ENCODE measurements at regions of chrX and their contacts with region 1.

Region 1: GRCh38 chrX:54999717-55000598 is at the start of gene APEX2:
- DNase-seq: peak; percentile 74 to 94 (median 86)
- ATAC-seq: peak; percentile 94
- H3K4me3 ChIP-seq: peak within 1 kb of the TSS; percentile 70 to 71
- H3K4me3 Mint-ChIP-seq: peak within 1 kb of the TSS; percentile 92
- H3K27ac ChIP-seq: peak within 1 kb of the TSS; percentile 97 to 98
- H3K27ac Mint-ChIP-seq: peak within 1 kb of the TSS; percentile 96
- H3K4me1 ChIP-seq: peaks cover 12% of the 10 kb centered on the region
- H3K4me1 Mint-ChIP-seq: peaks cover 35% of the 10 kb centered on the region
- H3K27me3 ChIP-seq: no peaks in the 10 kb centered on the region
- H3K27me3 Mint-ChIP-seq: no peaks in the 10 kb centered on the region
- CTCF ChIP-seq: no peak
- total RNA-seq, gene APEX2: 6.6 to 7.5 TPM

Region 2: DNA sequence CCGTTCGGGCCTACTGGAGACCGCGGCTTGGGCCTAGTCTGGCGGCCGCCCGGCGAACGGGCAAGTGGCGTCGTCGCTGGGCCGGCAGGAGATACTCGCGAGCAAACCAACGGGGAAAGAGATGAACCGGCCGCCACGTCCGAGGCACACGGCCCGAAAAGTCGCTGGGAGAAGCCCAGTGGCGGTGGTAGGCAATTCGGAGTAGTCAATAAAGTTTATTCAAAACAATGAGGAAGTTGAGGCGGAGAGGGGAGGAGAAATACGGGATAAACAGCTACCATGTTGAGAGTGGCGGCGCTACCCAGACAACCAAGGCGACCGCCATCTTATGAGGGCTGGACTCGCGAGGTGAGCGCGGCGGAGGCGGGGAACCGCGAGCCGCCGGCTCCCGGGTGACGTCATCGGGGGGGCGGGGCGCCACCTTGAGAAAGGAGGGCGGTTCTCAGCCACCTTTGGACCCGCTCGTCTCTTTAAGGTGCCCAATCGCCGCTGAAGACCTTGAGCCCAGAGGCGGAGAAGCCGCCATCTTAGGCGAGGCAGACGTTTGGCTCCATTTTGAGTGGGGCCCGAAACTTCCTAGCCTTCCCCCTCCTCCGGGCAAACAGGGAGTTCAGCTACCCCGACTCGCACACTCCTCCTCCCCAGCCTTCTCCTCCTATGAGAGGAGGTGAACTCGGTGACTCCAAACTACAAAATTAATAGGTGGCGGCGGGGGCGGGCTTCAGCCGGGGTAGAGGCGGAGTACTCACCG is 955.7 kb before region 1 on chrX and contains the start of gene PHF8:
- CTCF ChIA-PET with region 1: no interaction called
- POLR2A ChIA-PET with region 1: interaction called, 6 read pairs
- intact Hi-C with region 1: loop called in 1 of 2 experiments (anchors 5 kb)
- DNase-seq: peak; percentile 87 to 96 (median 95)
- ATAC-seq: peak; percentile 82
- H3K4me3 ChIP-seq: peak within 1 kb of the TSS; percentile 75 to 86
- H3K4me3 Mint-ChIP-seq: peak within 1 kb of the TSS; percentile 94
- H3K27ac ChIP-seq: peak within 1 kb of the TSS; percentile 85 to 95
- H3K27ac Mint-ChIP-seq: peak within 1 kb of the TSS; percentile 97
- H3K4me1 ChIP-seq: peaks cover 11% of the 10 kb centered on the region
- H3K4me1 Mint-ChIP-seq: peaks cover 29% of the 10 kb centered on the region
- H3K27me3 ChIP-seq: no peaks in the 10 kb centered on the region
- H3K27me3 Mint-ChIP-seq: no peaks in the 10 kb centered on the region
- CTCF ChIP-seq: no peak
- total RNA-seq, gene PHF8: 41.8 to 43.7 TPM

Region 3: GRCh38 chrX:54439967-54440871 is 559.7 kb before region 1 on chrX and contains the start of gene TSR2:
- CTCF ChIA-PET with region 1: no interaction called
- POLR2A ChIA-PET with region 1: interaction called, 6 read pairs
- intact Hi-C with region 1: loop called (anchors 2 to 5 kb)
- DNase-seq: peak; percentile 55 to 90 (median 78)
- ATAC-seq: peak; percentile 93
- H3K4me3 ChIP-seq: peak within 1 kb of the TSS; percentile 93 to 96
- H3K4me3 Mint-ChIP-seq: peak within 1 kb of the TSS; percentile 92
- H3K27ac ChIP-seq: peak within 1 kb of the TSS; percentile 66 to 73
- H3K27ac Mint-ChIP-seq: peak within 1 kb of the TSS; percentile 91
- H3K4me1 ChIP-seq: peaks cover 21% of the 10 kb centered on the region
- H3K4me1 Mint-ChIP-seq: peaks cover 31% of the 10 kb centered on the region
- H3K27me3 ChIP-seq: no peaks in the 10 kb centered on the region
- H3K27me3 Mint-ChIP-seq: no peaks in the 10 kb centered on the region
- CTCF ChIP-seq: no peak
- total RNA-seq, gene TSR2: 38.7 to 41.4 TPM

Region 4: GRCh38 chrX:54639346-54640102 is 360.4 kb before region 1 on chrX:
- CTCF ChIA-PET with region 1: no interaction called
- POLR2A ChIA-PET with region 1: interaction called, 10 read pairs
- intact Hi-C with region 1: loop called (anchors 2 to 5 kb)
- DNase-seq: peak; percentile 80 to 97 (median 92)
- ATAC-seq: peak; percentile 88
- H3K4me3 ChIP-seq: peak overlapping the region; percentile 60 to 94
- H3K4me3 Mint-ChIP-seq: peak overlapping the region; percentile 97
- H3K27ac ChIP-seq: peak overlapping the region; percentile 97 to 99
- H3K27ac Mint-ChIP-seq: peak overlapping the region; percentile 99
- H3K4me1 ChIP-seq: peaks cover 6% of the 10 kb centered on the region
- H3K4me1 Mint-ChIP-seq: peaks cover 9% of the 10 kb centered on the region
- H3K27me3 ChIP-seq: no peaks in the 10 kb centered on the region
- H3K27me3 Mint-ChIP-seq: no peaks in the 10 kb centered on the region
- CTCF ChIP-seq: peak; percentile 22

Region 5: GRCh38 chrX:54891573-54891972 is 108.4 kb before region 1 on chrX:
- CTCF ChIA-PET with region 1: no interaction called
- POLR2A ChIA-PET with region 1: no interaction called
- intact Hi-C with region 1: loop called in 1 of 2 experiments (anchors 1 kb)
- DNase-seq: peak in 8 of 9 experiments; percentile 1 to 67 (median 25)
- ATAC-seq: peak; percentile 38
- H3K4me3 ChIP-seq: no peak overlapping the region
- H3K4me3 Mint-ChIP-seq: no peak overlapping the region
- H3K27ac ChIP-seq: no peak overlapping the region
- H3K27ac Mint-ChIP-seq: no peak overlapping the region
- H3K4me1 ChIP-seq: no peaks in the 10 kb centered on the region
- H3K4me1 Mint-ChIP-seq: no peaks in the 10 kb centered on the region
- H3K27me3 ChIP-seq: no peaks in the 10 kb centered on the region
- H3K27me3 Mint-ChIP-seq: peaks cover 12% of the 10 kb centered on the region
- CTCF ChIP-seq: peak; percentile 18

Region 6: GRCh38 chrX:54950730-54951375 is 49.1 kb before region 1 on chrX:
- CTCF ChIA-PET with region 1: no interaction called
- POLR2A ChIA-PET with region 1: no interaction called
- intact Hi-C with region 1: no loop called
- DNase-seq: no peak
- ATAC-seq: no peak
- H3K4me3 ChIP-seq: no peak overlapping the region
- H3K4me3 Mint-ChIP-seq: no peak overlapping the region
- H3K27ac ChIP-seq: no peak overlapping the region
- H3K27ac Mint-ChIP-seq: no peak overlapping the region
- H3K4me1 ChIP-seq: no peaks in the 10 kb centered on the region
- H3K4me1 Mint-ChIP-seq: no peaks in the 10 kb centered on the region
- H3K27me3 ChIP-seq: no peaks in the 10 kb centered on the region
- H3K27me3 Mint-ChIP-seq: no peaks in the 10 kb centered on the region
- CTCF ChIP-seq: no peak

Region 7: GRCh38 chrX:55057675-55058249 is 57.8 kb after region 1 on chrX:
- CTCF ChIA-PET with region 1: interaction called, 3 read pairs
- POLR2A ChIA-PET with region 1: interaction called, 3 read pairs
- intact Hi-C with region 1: loop called (anchors 1 to 5 kb)
- DNase-seq: peak in 5 of 9 experiments; percentile 1 to 64 (median 33)
- ATAC-seq: peak; percentile 75
- H3K4me3 ChIP-seq: peak overlapping the region in 1 of 2 experiments; percentile 20
- H3K4me3 Mint-ChIP-seq: peak overlapping the region; percentile 71
- H3K27ac ChIP-seq: no peak overlapping the region
- H3K27ac Mint-ChIP-seq: peak overlapping the region; percentile 77
- H3K4me1 ChIP-seq: peaks cover 12% of the 10 kb centered on the region
- H3K4me1 Mint-ChIP-seq: peaks cover 15% of the 10 kb centered on the region
- H3K27me3 ChIP-seq: no peaks in the 10 kb centered on the region
- H3K27me3 Mint-ChIP-seq: no peaks in the 10 kb centered on the region
- CTCF ChIP-seq: peak; percentile 87